A549 (cell line): ENCODE measurements at regions of chrX and their contacts with region 1.

Region 1: GRCh38 chrX:17242470-17242869 is 132.5 kb upstream of the NHS start:
- DNase-seq: peak in 1 of 2 experiments; percentile 55
- ATAC-seq: peak; percentile 78 to 82; a peak in 5 of 6 replicates
- H3K4me3 ChIP-seq: no peak overlapping the region
- H3K27ac ChIP-seq: no peak overlapping the region
- H3K4me1 ChIP-seq: no peaks in the 10 kb centered on the region
- CTCF ChIP-seq: peak; percentile 72
- EP300 ChIP-seq: no peak
- POLR2A ChIP-seq: no peak
- RAD21 ChIP-seq: peak; percentile 79 to 82

Region 2: DNA sequence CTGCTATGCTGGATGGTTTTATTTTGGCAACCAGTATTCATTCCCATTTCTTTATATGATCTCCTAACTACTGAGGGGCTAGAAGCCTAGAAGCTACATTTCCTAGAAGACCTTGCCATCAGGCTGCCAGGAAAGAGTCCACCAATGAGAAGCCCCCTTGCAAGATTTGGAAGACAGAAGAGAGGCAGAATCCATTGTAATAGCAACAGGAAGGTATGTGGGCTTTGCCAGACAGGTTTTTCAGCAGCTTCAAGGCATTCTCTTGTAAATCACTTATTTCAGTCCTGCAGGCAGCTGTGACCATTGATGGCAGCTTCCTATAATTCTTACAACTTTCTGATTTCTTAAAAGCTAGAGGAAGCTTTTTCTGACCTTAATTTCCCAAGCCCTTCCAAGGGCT is 15.7 kb before region 1 on chrX:
- CTCF ChIA-PET with region 1: interaction called, 10 read pairs
- POLR2A ChIA-PET with region 1: no interaction called
- DNase-seq: no peak
- ATAC-seq: no peak
- H3K4me3 ChIP-seq: no peak overlapping the region
- H3K27ac ChIP-seq: no peak overlapping the region
- H3K4me1 ChIP-seq: no peaks in the 10 kb centered on the region
- CTCF ChIP-seq: no peak
- EP300 ChIP-seq: no peak
- POLR2A ChIP-seq: no peak
- RAD21 ChIP-seq: no peak

Region 3: GRCh38 chrX:17689971-17690409 is 447.5 kb after region 1 on chrX:
- CTCF ChIA-PET with region 1: interaction called, 30 read pairs
- POLR2A ChIA-PET with region 1: no interaction called
- DNase-seq: peak; percentile 35 to 64
- ATAC-seq: peak; percentile 93 to 94
- H3K4me3 ChIP-seq: no peak overlapping the region
- H3K27ac ChIP-seq: peak overlapping the region in 1 of 2 experiments; percentile 52; a peak in 3 of 6 replicates
- H3K4me1 ChIP-seq: peaks cover 6% of the 10 kb centered on the region; the same call in 2 of the 3 replicates
- CTCF ChIP-seq: peak; percentile 76
- EP300 ChIP-seq: no peak
- POLR2A ChIP-seq: no peak
- RAD21 ChIP-seq: peak; percentile 84 to 88